AG04450 (cell line): ENCODE measurements at regions of chr2 and their contacts with region 1.

Region 1: DNA sequence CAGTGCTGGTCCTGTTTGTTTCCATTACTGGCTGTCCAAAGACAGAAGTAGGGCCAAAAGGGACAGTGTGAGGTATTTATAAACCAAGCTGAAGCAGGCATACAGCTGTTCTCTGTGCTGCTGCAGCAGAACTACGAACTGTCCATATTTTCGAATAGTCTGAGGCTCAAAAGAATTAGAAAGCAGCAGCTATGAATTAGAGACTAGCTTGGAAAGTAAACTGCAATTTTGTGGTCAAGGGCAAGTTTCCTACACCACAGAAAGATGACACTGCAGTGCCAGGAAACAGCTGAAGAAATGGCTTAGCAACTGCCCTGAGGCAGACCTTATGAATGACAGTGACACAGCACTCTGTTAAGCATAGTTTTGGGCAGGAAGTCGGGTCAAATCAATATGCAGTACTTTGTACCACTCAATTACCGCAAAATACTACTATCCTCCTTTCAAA is 125.3 kb downstream of the TMEM131 start:
- DNase-seq: peak; percentile 58
- H3K4me3 ChIP-seq: no peak overlapping the region
- H3K27ac ChIP-seq: peak overlapping the region; percentile 42
- H3K27me3 ChIP-seq: no peaks in the 10 kb centered on the region
- CTCF ChIP-seq: no peak

Region 2: DNA sequence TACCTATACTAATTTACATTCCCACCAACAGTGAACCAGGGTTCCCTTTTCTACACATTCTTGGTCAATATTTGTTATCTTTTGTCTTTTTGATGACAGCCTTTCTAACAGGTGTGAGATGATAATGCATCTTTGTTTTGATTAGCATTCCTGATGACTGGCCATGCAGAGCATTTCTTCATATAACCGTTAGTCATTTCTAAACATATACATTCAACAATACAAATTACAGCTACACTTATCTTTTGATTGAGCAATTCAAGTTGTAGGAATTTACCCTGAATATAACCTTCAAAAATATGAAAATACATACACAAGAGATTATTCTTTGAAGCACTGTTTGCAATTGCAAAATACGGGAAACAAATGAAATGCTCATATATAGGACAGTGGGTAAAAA is 30.4 kb after region 1 on chr2:
- CTCF ChIA-PET with region 1: interaction called, 3 read pairs
- POLR2A ChIA-PET with region 1: interaction called, 10 read pairs
- DNase-seq: peak; percentile 1
- H3K4me3 ChIP-seq: no peak overlapping the region
- H3K27ac ChIP-seq: no peak overlapping the region
- H3K27me3 ChIP-seq: no peaks in the 10 kb centered on the region
- CTCF ChIP-seq: no peak